ENCODE measurements at regions of chr5 and their contacts with region 1.

Region 1: GRCh38 chr5:45542421-45542820 is 153.8 kb downstream of the HCN1 start:
- DNase-seq: no peak
- ATAC-seq: peak; percentile 92

Region 2: GRCh38 chr5:45596320-45596719 is 53.9 kb after region 1 on chr5:
- intact Hi-C with region 1: loop called (anchors 5 kb)
- DNase-seq: no peak
- ATAC-seq: no peak

Region 3: DNA sequence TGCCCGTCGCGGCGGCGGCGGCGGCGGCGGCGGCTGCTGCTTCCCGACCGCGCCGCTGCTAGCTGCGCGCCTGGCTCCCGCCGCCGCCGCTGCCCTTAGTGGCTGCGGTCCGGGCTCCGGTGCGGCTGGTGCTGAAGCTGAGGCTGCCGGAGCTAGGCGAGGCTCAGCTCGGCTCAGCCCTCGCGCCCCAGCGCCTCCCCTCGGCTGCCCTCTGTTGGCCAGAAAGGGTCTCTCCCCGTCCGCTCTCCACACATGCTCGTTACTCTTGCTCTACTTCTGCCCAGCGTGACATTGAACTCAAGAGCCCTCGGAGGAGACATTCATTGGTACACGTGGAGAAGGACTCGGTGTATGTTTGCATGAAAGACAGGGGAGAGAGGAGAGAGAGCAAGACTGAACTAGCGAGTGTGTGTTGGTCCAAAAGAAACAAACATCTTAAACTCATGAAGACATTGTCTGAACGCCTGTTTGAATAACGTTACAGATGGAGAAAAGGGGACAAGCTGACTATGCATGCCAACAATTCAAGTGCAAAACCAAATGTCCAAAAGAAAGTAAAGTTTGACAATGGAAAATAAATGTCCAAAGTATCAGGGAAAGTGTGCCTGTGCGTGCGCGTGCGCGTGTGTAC is 153.9 kb after region 1 on chr5 and contains the start of gene HCN1:
- intact Hi-C with region 1: loop called (anchors 10 kb)
- DNase-seq: peak; percentile 85
- ATAC-seq: peak; percentile 100
- total RNA-seq, gene HCN1: not detected

Region 4: GRCh38 chr5:45893309-45893708 is 350.9 kb after region 1 on chr5:
- intact Hi-C with region 1: no loop called
- DNase-seq: no peak
- ATAC-seq: no peak

Measured in Right ventricle myocardium inferior (tissue), 1 donor.